ENCODE measurements at regions of chr17 and their contacts with region 1.

Region 1: GRCh38 chr17:35242805-35243560 is at the start of gene SLFN5:
- DNase-seq: peak; percentile 92 to 95 (median 94)
- H3K4me3 ChIP-seq: peak within 1 kb of the TSS; percentile 87 to 99
- H3K4me3 Mint-ChIP-seq: peak within 1 kb of the TSS; percentile 98 to 100 (median 99)
- H3K27ac ChIP-seq: peak within 1 kb of the TSS; percentile 93
- H3K27ac Mint-ChIP-seq: peak within 1 kb of the TSS; percentile 97 to 100 (median 99)
- H3K4me1 ChIP-seq: peaks cover 53% of the 10 kb centered on the region
- H3K4me1 Mint-ChIP-seq: peaks cover 40 to 87% (median 55%) of the 10 kb centered on the region in 4 donors
- H3K27me3 ChIP-seq: no peaks in the 10 kb centered on the region
- H3K27me3 Mint-ChIP-seq: no peaks in the 10 kb centered on the region
- total RNA-seq, gene SLFN5: 182 to 188 TPM

Region 2: DNA sequence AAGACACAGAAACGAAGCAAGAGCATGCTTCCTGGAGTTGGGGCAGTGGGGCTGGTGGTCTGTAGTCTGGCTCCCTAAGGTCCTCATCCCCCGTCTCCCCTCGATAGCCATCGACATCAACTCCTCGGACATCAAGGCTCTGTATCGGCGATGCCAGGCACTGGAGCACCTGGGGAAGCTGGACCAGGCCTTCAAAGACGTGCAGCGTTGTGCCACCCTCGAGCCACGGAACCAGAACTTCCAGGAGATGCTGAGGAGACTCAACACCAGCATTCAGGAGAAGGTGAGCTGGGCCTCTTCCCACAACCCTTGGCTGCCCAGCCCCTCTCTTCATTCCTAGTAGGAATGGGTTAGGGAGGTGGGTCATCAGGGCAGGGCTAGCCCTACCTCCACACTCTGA is 93.0 kb before region 1 on chr17:
- CTCF ChIA-PET with region 1: no interaction called
- POLR2A ChIA-PET with region 1: no interaction called
- intact Hi-C with region 1: no loop called
- DNase-seq: no peak
- H3K4me3 ChIP-seq: no peak overlapping the region
- H3K4me3 Mint-ChIP-seq: no peak overlapping the region
- H3K27ac ChIP-seq: no peak overlapping the region
- H3K27ac Mint-ChIP-seq: peak overlapping the region in 1 of 7 donors; percentile 43
- H3K4me1 ChIP-seq: no peaks in the 10 kb centered on the region
- H3K4me1 Mint-ChIP-seq: no peaks in the 10 kb centered on the region
- H3K27me3 ChIP-seq: no peaks in the 10 kb centered on the region
- H3K27me3 Mint-ChIP-seq: no peaks in the 10 kb centered on the region

Region 3: GRCh38 chr17:35161281-35161761 is 81.7 kb before region 1 on chr17:
- CTCF ChIA-PET with region 1: no interaction called
- POLR2A ChIA-PET with region 1: interaction called, 50 read pairs
- intact Hi-C with region 1: loop called (anchors 1 kb)
- DNase-seq: peak; percentile 55 to 65 (median 62)
- H3K4me3 ChIP-seq: peak overlapping the region in 1 of 2 donors; percentile 12
- H3K4me3 Mint-ChIP-seq: peak overlapping the region; percentile 67 to 85 (median 74)
- H3K27ac ChIP-seq: peak overlapping the region; percentile 39
- H3K27ac Mint-ChIP-seq: peak overlapping the region; percentile 84 to 94 (median 93)
- H3K4me1 ChIP-seq: peaks cover 54% of the 10 kb centered on the region
- H3K4me1 Mint-ChIP-seq: peaks cover 38 to 77% (median 59%) of the 10 kb centered on the region in 4 donors
- H3K27me3 ChIP-seq: no peaks in the 10 kb centered on the region
- H3K27me3 Mint-ChIP-seq: no peaks in the 10 kb centered on the region

Region 4: GRCh38 chr17:35214631-35215273 is 28.2 kb before region 1 on chr17:
- CTCF ChIA-PET with region 1: interaction called, 54 read pairs
- POLR2A ChIA-PET with region 1: interaction called, 432 read pairs
- intact Hi-C with region 1: loop called (anchors 1 kb)
- DNase-seq: peak in 3 of 5 donors; percentile 57 to 65 (median 58)
- H3K4me3 ChIP-seq: peak overlapping the region; percentile 38 to 51
- H3K4me3 Mint-ChIP-seq: peak overlapping the region; percentile 16 to 85 (median 79)
- H3K27ac ChIP-seq: peak overlapping the region; percentile 60
- H3K27ac Mint-ChIP-seq: peak overlapping the region; percentile 87 to 97 (median 94)
- H3K4me1 ChIP-seq: peaks cover 93% of the 10 kb centered on the region
- H3K4me1 Mint-ChIP-seq: peaks cover 70 to 91% (median 79%) of the 10 kb centered on the region in 4 donors
- H3K27me3 ChIP-seq: no peaks in the 10 kb centered on the region
- H3K27me3 Mint-ChIP-seq: no peaks in the 10 kb centered on the region

Region 5: DNA sequence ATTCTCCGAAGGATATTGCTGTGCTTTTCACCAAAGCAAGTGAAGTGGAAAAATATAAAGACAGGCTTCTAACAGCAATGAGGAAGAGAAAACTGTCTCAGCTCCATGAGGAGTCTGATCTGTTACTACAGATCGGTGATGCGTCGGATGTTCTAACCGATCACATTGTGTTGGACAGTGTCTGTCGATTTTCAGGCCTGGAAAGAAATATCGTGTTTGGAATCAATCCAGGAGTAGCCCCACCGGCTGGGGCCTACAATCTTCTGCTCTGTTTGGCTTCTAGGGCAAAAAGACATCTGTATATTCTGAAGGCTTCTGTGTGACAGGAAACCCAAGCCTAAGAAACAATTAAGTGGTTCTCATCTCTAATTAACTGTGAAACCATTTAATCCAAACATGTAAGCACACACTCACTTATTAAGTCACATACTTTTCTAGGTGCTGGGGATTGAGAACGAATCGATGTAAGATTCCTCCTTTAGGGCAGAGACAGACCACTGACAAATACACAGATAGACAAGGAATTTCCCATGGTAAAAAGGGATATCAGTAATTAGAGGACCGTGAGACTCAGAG is 22.7 kb after region 1 on chr17:
- CTCF ChIA-PET with region 1: interaction called, 6 read pairs
- POLR2A ChIA-PET with region 1: interaction called, 53 read pairs
- intact Hi-C with region 1: no loop called
- DNase-seq: no peak
- H3K4me3 ChIP-seq: no peak overlapping the region
- H3K4me3 Mint-ChIP-seq: peak overlapping the region in 7 of 8 donors; percentile 0 to 71 (median 49)
- H3K27ac ChIP-seq: no peak overlapping the region
- H3K27ac Mint-ChIP-seq: peak overlapping the region in 5 of 7 donors; percentile 10 to 83 (median 65)
- H3K4me1 ChIP-seq: peaks cover 48% of the 10 kb centered on the region
- H3K4me1 Mint-ChIP-seq: peaks cover 45 to 64% (median 52%) of the 10 kb centered on the region in 4 donors
- H3K27me3 ChIP-seq: no peaks in the 10 kb centered on the region
- H3K27me3 Mint-ChIP-seq: no peaks in the 10 kb centered on the region

Region 6: DNA sequence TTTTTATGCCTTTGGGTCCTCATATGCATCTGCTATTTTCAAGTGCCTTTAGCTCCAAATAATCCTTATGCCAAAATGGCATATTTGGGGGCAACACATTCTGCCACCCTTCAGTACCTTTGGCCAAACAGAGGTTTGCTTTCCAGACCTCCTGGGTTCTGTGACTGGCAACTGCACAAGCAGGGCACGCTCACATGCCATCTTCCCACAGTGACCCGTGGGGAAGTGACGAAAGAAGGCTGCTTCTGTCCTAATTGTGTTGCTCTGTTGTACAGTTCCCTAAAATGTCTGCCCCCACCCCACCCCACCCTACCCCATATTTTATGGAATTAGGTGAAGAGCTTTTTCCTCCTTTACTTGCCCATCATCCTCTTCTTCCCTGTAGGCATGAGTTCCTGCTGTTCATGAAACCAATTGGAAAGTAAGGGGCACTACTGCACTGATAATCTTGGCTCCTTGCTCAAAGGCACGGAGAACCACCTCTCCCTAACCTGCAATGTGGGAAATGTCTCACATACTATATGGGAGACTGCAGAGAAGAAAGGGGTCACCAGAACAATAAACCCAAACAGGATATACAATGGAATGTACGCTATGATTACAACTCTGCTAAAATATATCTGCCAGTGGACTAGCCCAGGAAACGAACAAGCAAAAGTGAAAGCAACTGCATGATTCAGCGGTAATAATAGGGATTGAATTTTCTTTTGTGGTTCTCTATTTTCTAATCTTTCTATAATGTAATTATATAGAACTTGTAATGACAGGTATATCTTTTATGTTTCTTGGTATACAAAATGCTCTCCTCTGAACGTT is 297.8 kb after region 1 on chr17:
- CTCF ChIA-PET with region 1: interaction called, 87 read pairs
- POLR2A ChIA-PET with region 1: interaction called, 267 read pairs
- intact Hi-C with region 1: loop called (anchors 1 kb)
- DNase-seq: peak in 4 of 5 donors; percentile 43 to 54 (median 50)
- H3K4me3 ChIP-seq: peak overlapping the region; percentile 60 to 79
- H3K4me3 Mint-ChIP-seq: peak overlapping the region; percentile 87 to 98 (median 92)
- H3K27ac ChIP-seq: peak overlapping the region; percentile 74
- H3K27ac Mint-ChIP-seq: peak overlapping the region; percentile 80 to 98 (median 95)
- H3K4me1 ChIP-seq: peaks cover 45% of the 10 kb centered on the region
- H3K4me1 Mint-ChIP-seq: peaks cover 32 to 62% (median 45%) of the 10 kb centered on the region in 4 donors
- H3K27me3 ChIP-seq: no peaks in the 10 kb centered on the region
- H3K27me3 Mint-ChIP-seq: no peaks in the 10 kb centered on the region